ENCODE measurements at regions of chr1 and their contacts with region 1.

Region 1: DNA sequence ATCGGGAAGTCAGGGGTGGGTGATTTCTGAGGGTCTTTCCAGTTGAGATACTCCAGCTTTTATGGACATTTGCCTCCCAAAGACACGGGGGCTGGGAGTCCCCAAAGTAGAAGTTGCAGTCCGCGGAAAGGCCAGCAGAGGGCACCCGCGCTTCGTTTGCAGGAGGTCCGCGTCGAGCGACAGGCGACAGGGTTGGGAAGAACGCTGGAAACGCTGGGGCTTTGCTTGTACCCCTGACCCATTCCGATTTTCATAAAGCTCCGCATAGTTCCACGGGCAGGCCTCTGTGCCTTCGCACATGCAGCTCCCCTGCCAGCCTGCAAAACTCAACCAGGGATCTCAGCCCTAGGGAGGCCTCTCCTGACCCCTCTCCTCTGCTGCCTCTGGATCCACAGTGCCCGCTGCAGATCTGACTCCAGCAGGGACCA is 44.2 kb upstream of the LAPTM5 start:
- DNase-seq: peak; percentile 61 to 88 (median 78)
- ATAC-seq: peak; percentile 83
- H3K4me3 ChIP-seq: no peak overlapping the region
- H3K4me3 Mint-ChIP-seq: no peak overlapping the region
- H3K27ac ChIP-seq: no peak overlapping the region
- H3K27ac Mint-ChIP-seq: no peak overlapping the region
- H3K4me1 ChIP-seq: peaks cover 6% of the 10 kb centered on the region
- H3K4me1 Mint-ChIP-seq: no peaks in the 10 kb centered on the region
- H3K27me3 ChIP-seq: peaks cover 14 to 21% of the 10 kb centered on the region in 2 experiments
- H3K27me3 Mint-ChIP-seq: peaks cover 41% of the 10 kb centered on the region
- CTCF ChIP-seq: peak; percentile 98

Region 2: GRCh38 chr1:30511991-30512913 is 289.5 kb before region 1 on chr1:
- CTCF ChIA-PET with region 1: no interaction called
- POLR2A ChIA-PET with region 1: no interaction called
- intact Hi-C with region 1: no loop called
- DNase-seq: no peak
- ATAC-seq: no peak
- H3K4me3 ChIP-seq: no peak overlapping the region
- H3K4me3 Mint-ChIP-seq: no peak overlapping the region
- H3K27ac ChIP-seq: no peak overlapping the region
- H3K27ac Mint-ChIP-seq: no peak overlapping the region
- H3K4me1 ChIP-seq: no peaks in the 10 kb centered on the region
- H3K4me1 Mint-ChIP-seq: no peaks in the 10 kb centered on the region
- H3K27me3 ChIP-seq: peaks cover 2 to 4% of the 10 kb centered on the region in 2 experiments
- H3K27me3 Mint-ChIP-seq: peaks cover 26% of the 10 kb centered on the region
- CTCF ChIP-seq: no peak

Region 3: GRCh38 chr1:30911046-30911954 is 109.5 kb after region 1 on chr1:
- CTCF ChIA-PET with region 1: no interaction called
- POLR2A ChIA-PET with region 1: interaction called, 3 read pairs
- intact Hi-C with region 1: loop called (anchors 1 to 2 kb)
- DNase-seq: peak in 12 of 14 experiments; percentile 11 to 71 (median 38)
- ATAC-seq: no peak
- H3K4me3 ChIP-seq: no peak overlapping the region
- H3K4me3 Mint-ChIP-seq: peak overlapping the region; percentile 72
- H3K27ac ChIP-seq: no peak overlapping the region
- H3K27ac Mint-ChIP-seq: no peak overlapping the region
- H3K4me1 ChIP-seq: peaks cover 32% of the 10 kb centered on the region
- H3K4me1 Mint-ChIP-seq: peaks cover 16% of the 10 kb centered on the region
- H3K27me3 ChIP-seq: peaks cover 22 to 32% of the 10 kb centered on the region in 2 experiments
- H3K27me3 Mint-ChIP-seq: peaks cover 27% of the 10 kb centered on the region
- CTCF ChIP-seq: peak; percentile 60

Region 4: GRCh38 chr1:30929135-30929889 is 127.5 kb after region 1 on chr1:
- CTCF ChIA-PET with region 1: interaction called, 7 read pairs
- POLR2A ChIA-PET with region 1: no interaction called
- intact Hi-C with region 1: loop called (anchors 1 kb)
- DNase-seq: peak in 12 of 14 experiments; percentile 20 to 66 (median 35)
- ATAC-seq: peak; percentile 75
- H3K4me3 ChIP-seq: no peak overlapping the region
- H3K4me3 Mint-ChIP-seq: no peak overlapping the region
- H3K27ac ChIP-seq: no peak overlapping the region
- H3K27ac Mint-ChIP-seq: no peak overlapping the region
- H3K4me1 ChIP-seq: no peaks in the 10 kb centered on the region
- H3K4me1 Mint-ChIP-seq: no peaks in the 10 kb centered on the region
- H3K27me3 ChIP-seq: peaks cover 0 to 2% of the 10 kb centered on the region in 2 experiments
- H3K27me3 Mint-ChIP-seq: no peaks in the 10 kb centered on the region
- CTCF ChIP-seq: peak; percentile 78

Measured in CD4-positive, alpha-beta T cell (primary cell).